ENCODE measurements at regions of chr1 and their contacts with region 1.

Region 1: GRCh38 chr1:200738740-200739498 is at the start of gene CAMSAP2:
- DNase-seq: peak; percentile 95
- H3K4me3 Mint-ChIP-seq: peak within 1 kb of the TSS; percentile 84
- H3K27ac Mint-ChIP-seq: peak within 1 kb of the TSS; percentile 95
- H3K4me1 Mint-ChIP-seq: peaks cover 26% of the 10 kb centered on the region
- H3K27me3 Mint-ChIP-seq: no peaks in the 10 kb centered on the region
- CTCF ChIP-seq: no peak
- total RNA-seq, gene CAMSAP2: 144 and 209 TPM in 2 replicates

Region 2: DNA sequence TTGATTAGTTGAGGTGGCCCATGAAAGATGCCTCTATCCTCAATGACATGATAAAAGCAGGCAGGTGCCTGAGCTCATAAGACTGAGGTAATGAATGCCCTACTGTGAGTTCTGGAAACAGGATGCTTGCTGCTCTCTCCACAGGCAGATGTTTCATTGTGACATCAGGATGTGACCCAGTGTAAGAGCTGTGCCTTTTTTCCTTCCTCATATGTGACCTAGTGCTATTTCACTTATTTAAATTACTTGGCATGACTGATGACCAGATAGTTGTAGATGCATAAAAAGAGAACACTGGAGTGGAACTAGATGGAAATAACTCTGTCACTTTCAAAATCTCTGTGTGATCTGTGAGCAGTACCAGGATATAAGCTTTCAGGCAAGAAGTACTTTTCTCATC is 150.2 kb before region 1 on chr1:
- CTCF ChIA-PET with region 1: no interaction called
- POLR2A ChIA-PET with region 1: no interaction called
- intact Hi-C with region 1: no loop called
- DNase-seq: no peak
- H3K4me3 Mint-ChIP-seq: no peak overlapping the region
- H3K27ac Mint-ChIP-seq: no peak overlapping the region
- H3K4me1 Mint-ChIP-seq: no peaks in the 10 kb centered on the region
- H3K27me3 Mint-ChIP-seq: no peaks in the 10 kb centered on the region
- CTCF ChIP-seq: no peak

Region 3: DNA sequence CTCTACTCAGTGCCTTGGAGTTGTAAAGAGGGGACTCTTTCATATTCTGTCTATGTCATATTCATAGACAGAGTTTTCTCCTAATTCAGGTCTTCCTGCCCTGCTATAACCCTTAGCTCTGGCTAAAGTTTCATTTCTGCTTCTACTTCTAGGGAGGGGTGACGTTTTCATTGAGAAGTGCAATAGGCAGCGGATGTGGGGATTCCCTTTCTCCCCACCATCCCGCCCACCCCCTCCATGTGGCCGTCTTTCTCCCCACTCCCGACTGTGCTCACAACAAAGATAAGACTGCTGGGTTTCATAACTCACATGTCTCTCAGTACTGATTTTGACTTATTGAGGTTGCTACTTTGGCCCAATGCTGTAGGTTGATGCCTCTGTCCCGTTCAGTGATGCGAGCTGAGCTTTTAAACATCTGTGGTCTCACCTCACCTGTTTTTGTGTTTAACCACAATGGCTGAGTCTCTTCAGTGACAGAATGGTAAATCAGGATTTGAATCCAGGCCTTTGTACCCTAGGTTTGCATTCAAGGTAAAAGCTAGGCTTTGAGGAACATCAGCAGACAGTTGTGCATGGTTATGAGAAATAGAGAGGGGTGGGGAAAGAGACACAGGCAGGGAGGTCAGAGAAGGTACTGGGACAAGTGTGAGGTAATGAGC is 110.6 kb before region 1 on chr1:
- CTCF ChIA-PET with region 1: interaction called, 5 read pairs
- POLR2A ChIA-PET with region 1: interaction called, 27 read pairs
- intact Hi-C with region 1: no loop called
- DNase-seq: no peak
- H3K4me3 Mint-ChIP-seq: no peak overlapping the region
- H3K27ac Mint-ChIP-seq: no peak overlapping the region
- H3K4me1 Mint-ChIP-seq: peaks cover 10% of the 10 kb centered on the region
- H3K27me3 Mint-ChIP-seq: no peaks in the 10 kb centered on the region
- CTCF ChIP-seq: no peak

Region 4: GRCh38 chr1:200654660-200655059 is 84.3 kb before region 1 on chr1:
- CTCF ChIA-PET with region 1: interaction called, 6 read pairs
- POLR2A ChIA-PET with region 1: interaction called, 36 read pairs
- intact Hi-C with region 1: no loop called
- DNase-seq: peak; percentile 25
- H3K4me3 Mint-ChIP-seq: peak overlapping the region; percentile 1
- H3K27ac Mint-ChIP-seq: peak overlapping the region; percentile 33
- H3K4me1 Mint-ChIP-seq: peaks cover 44% of the 10 kb centered on the region
- H3K27me3 Mint-ChIP-seq: no peaks in the 10 kb centered on the region
- CTCF ChIP-seq: no peak

Region 5: DNA sequence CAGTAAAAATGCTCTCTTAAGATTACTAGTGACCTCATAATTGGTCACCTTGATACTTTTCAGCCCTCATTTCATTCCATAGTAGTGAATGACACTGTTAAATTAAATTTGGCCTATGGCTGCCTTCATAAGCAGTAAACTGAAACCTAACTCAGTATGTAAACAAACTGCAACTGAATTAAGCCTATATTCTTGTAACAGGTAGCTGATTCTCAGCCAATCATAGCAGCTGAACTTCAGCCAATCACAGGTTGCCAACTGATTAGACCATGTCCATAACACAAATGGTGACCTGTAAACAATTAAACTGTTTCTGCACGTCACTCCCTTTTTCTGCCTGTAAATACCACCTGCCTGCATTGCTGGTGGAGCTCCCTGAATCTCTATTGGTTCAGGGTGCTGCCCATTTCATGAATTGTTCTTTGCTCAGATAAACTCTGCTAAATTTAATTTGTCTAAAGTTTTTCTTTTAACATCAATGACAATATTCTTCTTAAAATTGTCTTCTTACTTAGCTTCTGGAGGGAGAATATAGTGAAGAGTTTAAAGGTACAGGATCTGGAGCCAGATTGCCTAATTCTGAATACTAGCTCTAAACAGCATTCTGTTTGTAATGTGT is 24.2 kb before region 1 on chr1:
- CTCF ChIA-PET with region 1: interaction called, 4 read pairs
- POLR2A ChIA-PET with region 1: interaction called, 31 read pairs
- intact Hi-C with region 1: no loop called
- DNase-seq: no peak
- H3K4me3 Mint-ChIP-seq: no peak overlapping the region
- H3K27ac Mint-ChIP-seq: no peak overlapping the region
- H3K4me1 Mint-ChIP-seq: peaks cover 5% of the 10 kb centered on the region
- H3K27me3 Mint-ChIP-seq: no peaks in the 10 kb centered on the region
- CTCF ChIP-seq: no peak

Region 6: DNA sequence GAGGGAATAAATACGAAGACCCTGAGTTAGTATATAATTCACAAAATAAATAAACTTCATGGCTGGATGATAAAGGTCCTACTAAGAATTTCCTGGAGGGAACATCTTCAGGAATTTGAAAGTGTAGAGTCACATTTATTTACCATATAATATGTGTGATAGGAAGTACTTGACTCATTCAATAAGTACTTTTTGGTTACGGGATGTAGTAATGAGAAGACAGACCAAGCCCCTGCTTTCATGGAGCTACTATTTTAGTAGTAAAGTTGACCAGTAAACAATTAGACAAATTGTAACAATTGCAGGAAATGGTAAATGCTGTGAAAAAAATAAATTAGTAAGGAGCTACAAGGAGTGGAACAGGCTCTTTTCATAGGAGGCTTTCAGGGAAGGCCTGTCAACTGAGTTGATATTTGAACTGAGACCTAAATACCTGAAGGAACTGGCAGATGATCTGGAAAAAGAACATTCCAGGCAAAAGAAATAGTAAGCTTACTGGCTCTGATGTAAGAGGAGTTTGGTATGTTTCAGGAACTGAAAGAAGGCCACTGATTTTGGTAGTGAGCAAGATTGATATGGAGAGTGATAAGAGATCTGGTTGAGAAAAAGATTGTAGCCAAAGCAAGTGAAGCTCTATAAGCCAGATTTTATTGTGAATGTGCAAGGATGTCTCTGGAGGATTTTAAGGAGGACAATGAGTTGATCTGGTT is 36.0 kb after region 1 on chr1:
- CTCF ChIA-PET with region 1: interaction called, 3 read pairs
- POLR2A ChIA-PET with region 1: interaction called, 31 read pairs
- intact Hi-C with region 1: no loop called
- DNase-seq: no peak
- H3K4me3 Mint-ChIP-seq: no peak overlapping the region
- H3K27ac Mint-ChIP-seq: peak overlapping the region; percentile 16
- H3K4me1 Mint-ChIP-seq: peaks cover 49% of the 10 kb centered on the region
- H3K27me3 Mint-ChIP-seq: no peaks in the 10 kb centered on the region
- CTCF ChIP-seq: no peak

Region 7: GRCh38 chr1:200795156-200795555 is 56.2 kb after region 1 on chr1:
- CTCF ChIA-PET with region 1: no interaction called
- POLR2A ChIA-PET with region 1: interaction called, 11 read pairs
- intact Hi-C with region 1: no loop called
- DNase-seq: peak; percentile 42
- H3K4me3 Mint-ChIP-seq: no peak overlapping the region
- H3K27ac Mint-ChIP-seq: peak overlapping the region; percentile 1
- H3K4me1 Mint-ChIP-seq: peaks cover 36% of the 10 kb centered on the region
- H3K27me3 Mint-ChIP-seq: no peaks in the 10 kb centered on the region
- CTCF ChIP-seq: no peak